Mucosa of descending colon (tissue), 3 donors: ENCODE measurements at regions of chr19 and their contacts with region 1.

Region 1: DNA sequence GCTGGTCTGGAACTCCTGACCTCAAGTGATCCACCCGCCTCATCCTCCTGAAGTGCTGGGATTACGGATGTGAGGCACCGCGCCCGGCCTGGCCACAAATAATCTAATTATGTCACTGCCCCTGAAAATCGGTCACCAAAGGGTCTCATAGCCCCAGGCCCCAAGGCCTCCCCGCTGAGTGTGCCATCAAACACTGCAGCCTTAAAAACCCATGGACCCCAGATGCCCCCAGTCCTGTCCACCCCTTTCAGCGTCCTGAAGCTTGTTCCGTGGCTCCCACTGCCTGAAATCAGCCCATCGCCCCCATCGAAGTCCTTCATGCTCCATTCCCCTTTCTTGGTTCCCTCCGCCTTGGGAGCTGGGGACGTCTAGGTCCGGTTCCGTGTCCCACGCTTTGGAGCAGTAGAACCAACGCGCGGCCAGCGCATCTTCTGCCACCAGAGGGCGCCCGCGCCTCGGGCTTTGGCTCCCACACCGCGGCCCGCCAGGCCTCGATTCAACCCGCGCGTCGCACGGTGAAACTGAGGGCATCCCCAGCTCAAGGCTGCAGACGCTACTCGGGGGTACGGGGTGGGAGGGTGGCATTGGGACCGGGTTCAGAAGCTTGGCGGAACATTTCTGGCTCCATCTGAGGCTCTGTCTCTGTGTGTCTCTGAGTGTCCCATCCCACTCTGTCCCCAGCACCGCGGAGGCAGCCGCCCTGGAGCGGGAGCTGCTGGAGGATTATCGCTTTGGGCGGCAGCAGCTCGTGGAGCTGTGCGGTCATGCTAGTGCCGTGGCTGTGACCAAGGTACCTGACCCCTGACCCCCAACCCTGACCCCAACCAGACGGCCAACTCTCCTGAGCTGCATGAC is 3.5 kb downstream of the YJEFN3 start:
- DNase-seq: peak; percentile 84 to 92 (median 89)
- ATAC-seq: peak; percentile 84
- H3K4me3 ChIP-seq: no peak overlapping the region
- H3K4me1 ChIP-seq: peaks cover 6% of the 10 kb centered on the region
- CTCF ChIP-seq: peak; percentile 93

Region 2: DNA sequence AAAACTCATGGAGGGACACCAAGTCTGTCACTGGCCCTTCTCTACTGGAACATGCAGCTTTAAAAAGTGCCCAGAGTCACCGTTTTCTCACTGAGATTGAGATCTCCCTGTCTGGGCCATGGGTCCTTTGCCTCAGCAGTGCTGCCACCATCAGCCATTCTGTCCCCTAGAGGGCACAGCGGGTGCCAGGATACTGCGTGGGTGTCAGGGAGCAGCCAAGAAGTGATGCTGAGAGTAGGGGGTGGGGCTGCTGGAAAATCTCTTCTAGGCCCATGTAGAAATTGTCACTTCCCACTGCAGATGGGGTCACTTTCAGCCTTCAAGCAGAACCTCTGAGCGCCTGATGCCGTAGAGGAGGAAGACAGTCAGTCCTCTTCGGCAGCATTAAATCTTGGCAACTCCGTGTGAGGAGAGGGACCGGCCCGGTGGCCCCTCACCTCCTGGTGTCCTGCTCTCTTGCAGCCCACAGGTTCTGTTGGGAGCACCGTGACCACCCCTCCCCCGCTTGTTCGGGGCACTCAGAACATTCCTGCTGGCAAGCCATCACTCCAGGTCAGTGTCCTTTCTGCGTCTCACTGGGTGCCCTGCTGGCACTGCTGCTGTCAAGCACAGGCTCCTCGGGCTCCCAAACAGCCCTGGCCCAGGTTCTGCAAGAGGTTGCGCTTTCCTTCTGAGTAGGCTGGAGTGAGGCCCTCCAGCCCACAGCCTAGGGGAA is 38.2 kb before region 1 on chr19:
- intact Hi-C with region 1: no loop called
- DNase-seq: no peak
- ATAC-seq: no peak
- H3K4me3 ChIP-seq: no peak overlapping the region
- H3K4me1 ChIP-seq: peaks cover 19% of the 10 kb centered on the region
- CTCF ChIP-seq: no peak

Region 3: DNA sequence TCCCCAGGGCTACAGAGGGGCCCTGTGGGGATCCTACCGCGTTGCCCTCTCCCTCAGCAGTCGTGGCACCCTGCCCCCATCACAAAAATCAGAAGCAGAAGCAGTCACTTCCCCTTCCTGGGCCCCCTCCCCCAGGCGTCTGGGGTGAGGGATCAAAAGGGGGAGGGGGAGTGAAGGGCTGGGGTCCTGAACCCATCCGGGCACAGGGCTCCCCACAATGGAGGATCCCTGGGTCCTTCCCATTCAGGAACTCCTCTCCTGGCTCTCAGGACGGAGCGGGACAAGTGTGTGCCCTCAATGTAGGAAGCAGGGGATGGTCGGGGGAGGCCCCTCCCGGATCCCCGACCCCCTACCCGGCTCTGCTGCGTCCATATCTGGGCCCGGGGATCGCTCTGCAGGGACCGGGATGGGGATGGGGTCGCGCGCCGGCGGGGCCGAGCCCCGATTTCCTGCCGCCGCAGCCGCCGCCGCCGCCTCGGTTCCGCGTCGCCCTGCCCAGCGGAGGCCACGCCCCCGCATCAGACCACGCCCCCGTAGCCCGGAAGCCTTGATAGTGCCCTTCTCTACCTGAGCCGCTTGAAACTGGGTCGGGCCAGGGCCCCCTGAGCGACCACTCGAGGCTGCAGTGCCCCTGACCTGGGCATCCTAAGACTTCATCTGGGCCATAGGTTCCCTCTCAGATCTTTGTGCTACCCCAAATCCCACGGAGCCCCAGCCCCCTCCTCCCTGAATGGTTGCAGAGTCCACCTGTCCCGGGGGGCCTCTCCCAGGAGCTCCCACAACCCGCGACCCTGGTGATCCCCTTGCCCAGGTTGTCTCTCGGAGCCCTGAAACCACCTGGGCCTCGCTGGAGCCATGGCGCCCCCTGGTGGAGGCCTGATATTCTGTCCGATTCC is 111.2 kb after region 1 on chr19 and contains the start of gene GMIP:
- intact Hi-C with region 1: loop called (anchors 5 kb)
- DNase-seq: peak; percentile 94
- ATAC-seq: peak; percentile 96
- H3K4me3 ChIP-seq: peak within 1 kb of the TSS; percentile 65
- H3K4me1 ChIP-seq: no peaks in the 10 kb centered on the region
- CTCF ChIP-seq: peak; percentile 70
- total RNA-seq, gene GMIP: 18.1 to 35.5 (median 33.1) TPM